HEK293 (cell line): ENCODE measurements at regions of chr15 and their contacts with region 1.

Region 1: GRCh38 chr15:97750060-97750459 is 210.4 kb upstream of the ARRDC4 start:
- H3K4me3 ChIP-seq: no peak overlapping the region
- H3K27ac ChIP-seq: no peak overlapping the region
- H3K4me1 ChIP-seq: no peaks in the 10 kb centered on the region
- CTCF ChIP-seq: no peak

Region 2: GRCh38 chr15:97561529-97561928 is 188.5 kb before region 1 on chr15:
- CTCF ChIA-PET with region 1: no interaction called
- POLR2A ChIA-PET with region 1: no interaction called
- H3K4me3 ChIP-seq: no peak overlapping the region
- H3K27ac ChIP-seq: no peak overlapping the region
- H3K4me1 ChIP-seq: no peaks in the 10 kb centered on the region
- CTCF ChIP-seq: no peak

Region 3: GRCh38 chr15:97694456-97694855 is 55.6 kb before region 1 on chr15:
- CTCF ChIA-PET with region 1: no interaction called
- POLR2A ChIA-PET with region 1: no interaction called
- H3K4me3 ChIP-seq: no peak overlapping the region
- H3K27ac ChIP-seq: no peak overlapping the region
- H3K4me1 ChIP-seq: no peaks in the 10 kb centered on the region
- CTCF ChIP-seq: no peak

Region 4: GRCh38 chr15:97791824-97792792 is 42.0 kb after region 1 on chr15:
- CTCF ChIA-PET with region 1: no interaction called
- POLR2A ChIA-PET with region 1: no interaction called
- H3K4me3 ChIP-seq: no peak overlapping the region
- H3K27ac ChIP-seq: no peak overlapping the region
- H3K4me1 ChIP-seq: no peaks in the 10 kb centered on the region
- CTCF ChIP-seq: no peak

Region 5: DNA sequence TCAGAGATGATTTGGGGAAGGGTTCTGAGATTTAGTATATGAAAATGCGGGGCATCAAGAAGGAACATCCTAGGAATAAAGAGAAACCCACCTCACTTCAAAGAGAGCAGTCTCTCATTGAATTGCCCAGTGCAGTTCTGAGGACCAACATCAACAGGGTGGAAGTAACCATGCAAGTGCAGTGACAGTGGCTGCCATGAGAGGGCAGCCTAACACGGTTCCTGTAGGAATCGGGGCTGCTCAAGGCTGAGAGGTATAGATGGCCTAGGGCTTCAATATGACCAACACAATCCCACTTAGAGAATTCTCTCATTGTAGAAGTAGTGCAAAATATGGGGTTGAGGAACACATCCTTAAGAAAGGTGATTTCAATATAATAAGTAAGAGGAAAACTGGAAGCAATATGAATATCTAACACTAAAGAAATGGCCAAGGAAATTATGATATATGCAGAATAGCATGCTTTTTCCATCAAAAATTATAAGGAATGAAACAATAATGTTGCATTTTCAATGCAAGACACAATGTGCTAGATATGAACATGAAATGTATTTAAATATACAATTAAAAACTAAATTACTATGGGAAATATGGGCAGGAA is 159.3 kb after region 1 on chr15:
- CTCF ChIA-PET with region 1: no interaction called
- POLR2A ChIA-PET with region 1: no interaction called
- H3K4me3 ChIP-seq: no peak overlapping the region
- H3K27ac ChIP-seq: no peak overlapping the region
- H3K4me1 ChIP-seq: no peaks in the 10 kb centered on the region
- CTCF ChIP-seq: peak; percentile 39; the same call in 1 of the 2 replicates

Region 6: GRCh38 chr15:99085413-99086326 is 1335.6 kb after region 1 on chr15:
- CTCF ChIA-PET with region 1: interaction called, 10 read pairs
- POLR2A ChIA-PET with region 1: no interaction called
- H3K4me3 ChIP-seq: no peak overlapping the region
- H3K27ac ChIP-seq: no peak overlapping the region
- H3K4me1 ChIP-seq: no peaks in the 10 kb centered on the region
- CTCF ChIP-seq: no peak